ENCODE measurements at regions of chr19 and their contacts with region 1.

Region 1: GRCh38 chr19:46614114-46614722 is 10.7 kb downstream of the PTGIR start:
- DNase-seq: peak; percentile 85
- H3K4me3 ChIP-seq: no peak overlapping the region
- H3K27ac ChIP-seq: no peak overlapping the region
- H3K4me1 ChIP-seq: no peaks in the 10 kb centered on the region
- H3K27me3 ChIP-seq: no peaks in the 10 kb centered on the region
- CTCF ChIP-seq: peak; percentile 82

Region 2: GRCh38 chr19:46661735-46662592 is 47.7 kb after region 1 on chr19:
- intact Hi-C with region 1: loop called (anchors 2 kb)
- DNase-seq: peak; percentile 81
- H3K4me3 ChIP-seq: peak overlapping the region; percentile 30
- H3K27ac ChIP-seq: peak overlapping the region; percentile 19
- H3K4me1 ChIP-seq: peaks cover 6% of the 10 kb centered on the region
- H3K27me3 ChIP-seq: peaks cover 30% of the 10 kb centered on the region
- CTCF ChIP-seq: peak; percentile 87

Region 3: GRCh38 chr19:46697204-46697960 is 83.2 kb after region 1 on chr19:
- intact Hi-C with region 1: no loop called
- DNase-seq: peak; percentile 97
- H3K4me3 ChIP-seq: no peak overlapping the region
- H3K27ac ChIP-seq: no peak overlapping the region
- H3K4me1 ChIP-seq: no peaks in the 10 kb centered on the region
- H3K27me3 ChIP-seq: no peaks in the 10 kb centered on the region
- CTCF ChIP-seq: no peak

Measured in colonic mucosa (tissue), 4 donors.